Spleen (tissue), 13 donors: ENCODE measurements at regions of chr3 and their contacts with region 1.

Region 1: DNA sequence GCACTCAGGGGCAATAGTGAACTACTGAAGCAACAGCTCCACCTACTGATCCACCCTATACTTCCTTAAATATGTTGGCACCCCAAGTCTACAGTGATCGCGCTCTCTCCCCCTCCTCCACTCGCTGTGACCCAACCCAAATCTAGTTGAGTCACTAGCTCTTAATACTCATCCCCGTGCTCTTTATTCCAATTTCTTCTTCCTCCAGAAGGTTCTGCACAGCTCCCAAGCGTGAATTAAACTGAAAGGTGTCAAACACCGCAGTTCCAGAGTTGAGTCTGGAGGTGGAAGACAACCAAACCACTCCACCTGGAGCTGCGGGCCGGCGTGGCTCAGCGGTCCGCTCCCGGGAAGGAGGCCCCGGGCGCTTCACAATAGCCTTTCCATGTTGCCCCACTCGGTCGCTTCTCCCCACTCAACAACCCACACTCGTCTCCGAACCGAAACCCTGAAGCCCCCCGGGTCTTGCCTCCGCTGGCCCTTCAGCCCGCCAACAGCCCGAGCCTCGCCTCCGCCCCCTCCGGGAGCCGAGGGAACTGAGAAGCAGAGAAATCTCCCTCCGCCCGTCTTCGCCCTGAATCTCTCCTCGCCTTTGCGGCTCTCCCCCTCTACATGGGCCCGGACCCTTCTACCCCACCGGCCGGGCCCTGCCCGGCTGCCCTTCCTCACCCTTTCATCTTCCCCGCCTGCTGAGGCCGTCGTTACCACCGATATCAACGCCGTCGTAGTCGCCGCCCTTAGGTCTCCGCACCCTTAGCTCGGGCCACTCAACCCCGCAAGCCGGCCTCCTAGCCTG is 578 bp downstream of the NAA50 start:
- DNase-seq: peak; percentile 94
- H3K4me3 ChIP-seq: peak overlapping the region; percentile 63 to 89 (median 77)
- H3K27ac ChIP-seq: peak overlapping the region; percentile 93 to 99 (median 98)
- H3K4me1 ChIP-seq: peaks cover 39 to 81% (median 76%) of the 10 kb centered on the region in 6 donors
- H3K27me3 ChIP-seq: no peaks in the 10 kb centered on the region
- CTCF ChIP-seq: peak; percentile 39 to 86 (median 76)
- POLR2A ChIP-seq: no peak

Region 2: DNA sequence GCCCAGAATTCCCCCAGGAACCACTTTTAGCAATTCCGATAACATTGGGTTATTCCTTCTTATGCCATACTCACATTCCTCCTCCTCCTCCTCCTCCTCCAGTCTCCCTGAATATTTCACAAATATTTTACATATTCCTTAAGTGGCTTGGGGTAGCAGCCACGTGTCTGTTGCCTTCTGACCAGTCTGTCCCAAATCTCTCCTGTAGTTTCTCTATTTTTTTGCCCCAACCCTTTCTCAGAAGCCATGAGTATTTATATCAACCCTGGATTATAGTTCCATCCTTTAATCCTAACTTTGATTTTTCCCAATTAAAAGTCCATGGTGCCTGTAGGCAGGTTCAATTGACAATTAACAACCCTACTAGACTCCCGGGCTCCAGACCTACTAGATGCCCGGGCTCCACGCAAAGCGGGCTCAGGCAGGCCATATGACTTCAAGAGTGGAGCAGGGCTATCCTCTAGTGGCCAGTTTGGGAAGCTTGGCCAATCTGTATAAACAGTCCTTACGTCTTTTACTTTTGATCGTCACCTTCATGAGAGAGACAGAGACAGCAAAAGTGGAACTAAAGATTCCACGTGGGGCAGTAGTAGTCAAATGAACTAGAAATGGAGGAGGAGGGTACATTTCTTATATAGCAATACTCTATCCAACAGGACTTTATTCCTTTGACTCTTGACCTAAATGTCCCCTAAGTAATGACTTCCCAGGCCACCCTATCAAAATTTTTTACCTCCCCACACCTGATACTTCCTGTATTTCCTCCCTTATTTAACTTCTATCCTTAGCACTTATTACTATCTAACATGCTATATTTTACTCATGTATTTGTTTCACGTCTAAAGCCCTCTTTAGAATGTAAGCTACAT is 118.7 kb before region 1 on chr3:
- intact Hi-C with region 1: no loop called
- DNase-seq: peak; percentile 82
- H3K4me3 ChIP-seq: peak overlapping the region in 1 of 8 donors; percentile 42
- H3K27ac ChIP-seq: peak overlapping the region in 6 of 8 donors; percentile 55 to 80 (median 71)
- H3K4me1 ChIP-seq: peaks cover 0 to 49% (median 18%) of the 10 kb centered on the region in 6 donors
- H3K27me3 ChIP-seq: no peaks in the 10 kb centered on the region
- CTCF ChIP-seq: peak; percentile 25 to 81 (median 69)
- POLR2A ChIP-seq: no peak

Region 3: GRCh38 chr3:113838631-113839209 is 93.2 kb after region 1 on chr3 and contains the start of gene GRAMD1C:
- intact Hi-C with region 1: loop called (anchors 10 kb)
- DNase-seq: peak; percentile 98
- H3K4me3 ChIP-seq: peak within 1 kb of the TSS; percentile 36 to 77 (median 54)
- H3K27ac ChIP-seq: peak within 1 kb of the TSS in 7 of 8 donors; percentile 33 to 78 (median 72)
- H3K4me1 ChIP-seq: peaks cover 0 to 21% (median 9%) of the 10 kb centered on the region in 6 donors
- H3K27me3 ChIP-seq: no peaks in the 10 kb centered on the region
- CTCF ChIP-seq: peak; percentile 62 to 92 (median 86)
- POLR2A ChIP-seq: no peak
- total RNA-seq, gene GRAMD1C: 3.0 to 14.2 (median 5.3) TPM

Region 4: GRCh38 chr3:113852506-113852905 is 107.0 kb after region 1 on chr3:
- intact Hi-C with region 1: no loop called
- DNase-seq: no peak
- H3K4me3 ChIP-seq: no peak overlapping the region
- H3K27ac ChIP-seq: no peak overlapping the region
- H3K4me1 ChIP-seq: no peaks in the 10 kb centered on the region
- H3K27me3 ChIP-seq: no peaks in the 10 kb centered on the region
- CTCF ChIP-seq: no peak
- POLR2A ChIP-seq: no peak